PC-3 (cell line): ENCODE measurements at regions of chr2 and their contacts with region 1.

Region 1: GRCh38 chr2:39530411-39530866 is 93.4 kb upstream of the MAP4K3 start:
- DNase-seq: peak; percentile 66
- ATAC-seq: peak; percentile 79
- H3K4me3 ChIP-seq: no peak overlapping the region
- H3K27ac ChIP-seq: peak overlapping the region; percentile 51
- H3K4me1 ChIP-seq: peaks cover 29% of the 10 kb centered on the region
- H3K27me3 ChIP-seq: no peaks in the 10 kb centered on the region
- CTCF ChIP-seq: peak; percentile 49

Region 2: GRCh38 chr2:39547811-39548719 is 17.6 kb after region 1 on chr2:
- CTCF ChIA-PET with region 1: no interaction called
- POLR2A ChIA-PET with region 1: interaction called, 3 read pairs
- intact Hi-C with region 1: loop called (anchors 2 kb)
- DNase-seq: peak; percentile 55
- ATAC-seq: no peak
- H3K4me3 ChIP-seq: no peak overlapping the region
- H3K27ac ChIP-seq: no peak overlapping the region
- H3K4me1 ChIP-seq: peaks cover 30% of the 10 kb centered on the region
- H3K27me3 ChIP-seq: no peaks in the 10 kb centered on the region
- CTCF ChIP-seq: no peak